Activated CD8-positive, alpha-beta T cell treated with anti-CD3 and anti-CD28 coated beads for 36 hours (primary cell): ENCODE measurements at regions of chr6 and their contacts with region 1.

Region 1: GRCh38 chr6:37169496-37170272 is at the start of gene PIM1:
- DNase-seq: peak; percentile 100
- ATAC-seq: peak; percentile 80
- H3K4me3 Mint-ChIP-seq: peak within 1 kb of the TSS; percentile 93
- H3K27ac Mint-ChIP-seq: peak within 1 kb of the TSS; percentile 98
- H3K4me1 Mint-ChIP-seq: peaks cover 37% of the 10 kb centered on the region
- H3K27me3 Mint-ChIP-seq: no peaks in the 10 kb centered on the region
- CTCF ChIP-seq: no peak
- total RNA-seq, gene PIM1: 293 to 305 TPM

Region 2: DNA sequence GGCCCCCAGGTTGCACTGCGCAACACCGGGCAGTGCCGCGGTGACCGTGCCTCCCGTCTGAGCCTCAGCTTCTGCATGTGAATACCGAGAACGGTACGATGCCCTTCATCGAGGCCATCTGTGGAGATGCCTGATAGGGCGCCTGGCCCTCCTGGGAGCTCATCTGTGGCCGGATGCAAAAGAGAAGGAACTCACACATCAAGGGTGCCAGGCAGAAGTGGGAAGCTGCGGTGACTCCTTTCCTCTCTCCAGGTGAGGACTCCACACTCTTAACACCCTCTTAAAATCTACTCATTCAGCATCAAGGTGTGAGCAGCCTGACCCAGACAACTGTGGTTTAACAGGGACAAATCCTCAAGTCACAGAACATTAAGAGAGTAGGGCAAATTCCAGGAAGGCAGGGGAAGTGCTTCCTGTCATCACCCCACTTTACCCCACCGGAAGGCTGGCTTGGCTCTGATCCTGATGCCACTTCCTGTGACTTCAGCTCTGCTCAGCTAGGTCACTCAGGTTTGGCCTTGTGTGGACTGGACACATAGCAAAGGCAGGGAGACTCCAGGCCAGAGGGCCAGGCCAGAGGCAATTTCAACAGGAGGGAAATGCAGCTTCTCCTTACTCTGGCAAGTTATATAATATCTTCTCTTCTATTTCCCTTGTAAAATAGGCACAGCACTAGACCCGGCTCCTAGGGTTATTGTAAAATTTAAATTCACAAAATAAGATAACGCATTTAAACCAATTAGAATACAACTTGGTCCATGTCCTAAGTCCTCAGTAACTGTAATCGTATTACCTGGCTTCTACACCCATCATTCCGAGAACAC is 399.8 kb before region 1 on chr6:
- CTCF ChIA-PET with region 1: no interaction called
- POLR2A ChIA-PET with region 1: no interaction called
- intact Hi-C with region 1: no loop called
- DNase-seq: peak; percentile 66
- ATAC-seq: peak; percentile 60
- H3K4me3 Mint-ChIP-seq: peak overlapping the region; percentile 39
- H3K27ac Mint-ChIP-seq: peak overlapping the region; percentile 79
- H3K4me1 Mint-ChIP-seq: peaks cover 35% of the 10 kb centered on the region
- H3K27me3 Mint-ChIP-seq: no peaks in the 10 kb centered on the region
- CTCF ChIP-seq: no peak

Region 3: DNA sequence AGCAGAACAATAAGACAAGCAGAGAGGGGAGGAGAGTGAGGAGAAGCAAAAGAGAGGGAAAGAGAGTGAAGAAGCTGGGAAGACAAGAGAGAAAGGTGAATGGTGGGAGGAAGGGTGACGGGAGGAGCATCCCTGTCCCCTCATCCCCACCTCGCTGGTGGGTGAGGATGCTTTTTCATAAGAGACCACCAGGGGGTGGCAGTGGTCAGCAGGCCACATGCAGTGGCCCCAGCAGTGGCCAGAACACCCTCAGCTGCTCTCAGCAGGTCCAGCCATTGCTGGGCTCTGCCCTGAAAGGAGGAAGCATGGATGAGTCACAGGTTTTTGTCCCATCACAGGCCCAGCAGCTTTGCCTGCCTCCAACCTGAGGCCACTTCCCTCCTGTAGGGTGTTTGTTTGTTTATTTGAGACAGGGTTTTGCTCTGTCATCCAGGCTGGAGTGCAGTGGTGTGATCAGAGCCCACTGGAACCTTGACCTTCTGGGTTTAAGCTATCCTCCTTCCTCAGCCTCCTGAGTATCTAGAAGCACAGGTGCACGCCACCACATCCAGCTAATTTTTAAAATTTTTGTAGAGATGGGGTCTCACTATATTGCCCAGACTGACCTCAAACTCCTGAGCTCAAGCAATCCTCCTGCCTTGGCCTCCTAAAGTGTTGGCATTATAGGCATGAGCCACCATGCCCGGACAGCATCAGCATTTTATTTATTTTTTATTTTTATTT is 140.3 kb before region 1 on chr6:
- CTCF ChIA-PET with region 1: interaction called, 502 read pairs
- POLR2A ChIA-PET with region 1: interaction called, 158 read pairs
- intact Hi-C with region 1: no loop called
- DNase-seq: peak; percentile 70
- ATAC-seq: peak; percentile 25
- H3K4me3 Mint-ChIP-seq: no peak overlapping the region
- H3K27ac Mint-ChIP-seq: peak overlapping the region; percentile 67
- H3K4me1 Mint-ChIP-seq: peaks cover 65% of the 10 kb centered on the region
- H3K27me3 Mint-ChIP-seq: no peaks in the 10 kb centered on the region
- CTCF ChIP-seq: peak; percentile 58

Region 4: DNA sequence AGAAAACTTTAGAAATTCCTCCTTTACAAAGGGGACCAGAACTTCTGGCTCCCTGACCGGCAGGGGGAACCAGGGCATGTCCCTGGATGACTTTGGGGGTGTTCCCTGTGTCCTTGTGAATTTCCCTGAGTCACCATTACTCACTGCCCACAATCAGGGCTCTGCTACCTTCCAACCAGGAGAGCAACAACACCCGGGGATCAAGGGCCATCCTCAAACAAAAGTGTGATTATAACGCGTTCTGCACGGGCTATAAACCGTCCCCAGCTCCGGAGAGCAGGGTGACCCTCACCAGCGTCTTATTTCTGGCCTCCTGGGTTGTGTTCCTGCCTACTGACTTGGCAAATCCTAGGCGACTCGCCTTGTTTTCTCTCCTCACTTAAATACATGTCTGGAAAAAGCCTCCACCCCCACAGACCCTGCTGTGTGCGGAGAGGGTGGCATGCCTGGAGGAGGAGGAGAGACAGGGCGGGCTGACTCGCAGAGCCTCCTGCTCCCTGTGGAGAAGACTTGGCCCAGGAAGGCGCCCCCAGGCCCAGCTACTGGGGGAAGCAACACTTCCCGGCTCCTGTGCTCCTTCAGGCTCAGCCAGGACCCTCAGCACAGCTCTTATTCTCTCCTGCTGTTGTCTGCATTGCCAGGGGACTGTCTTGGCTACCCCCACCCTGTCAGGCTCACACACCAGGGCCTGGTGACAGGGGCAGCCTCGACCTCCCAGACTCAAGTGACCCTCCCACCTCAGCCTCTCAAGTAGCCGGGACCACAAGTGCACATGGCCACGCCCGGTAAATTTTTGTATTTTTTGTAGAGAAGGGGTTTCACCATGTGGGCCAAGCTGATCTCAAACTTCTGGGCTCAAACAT is 110.1 kb before region 1 on chr6:
- CTCF ChIA-PET with region 1: interaction called, 226 read pairs
- POLR2A ChIA-PET with region 1: interaction called, 6 read pairs
- intact Hi-C with region 1: no loop called
- DNase-seq: peak; percentile 31
- ATAC-seq: peak; percentile 55
- H3K4me3 Mint-ChIP-seq: no peak overlapping the region
- H3K27ac Mint-ChIP-seq: no peak overlapping the region
- H3K4me1 Mint-ChIP-seq: peaks cover 7% of the 10 kb centered on the region
- H3K27me3 Mint-ChIP-seq: no peaks in the 10 kb centered on the region
- CTCF ChIP-seq: no peak

Region 5: GRCh38 chr6:37102279-37103168 is 67.2 kb before region 1 on chr6:
- CTCF ChIA-PET with region 1: interaction called, 24 read pairs
- POLR2A ChIA-PET with region 1: interaction called, 7 read pairs
- intact Hi-C with region 1: no loop called
- DNase-seq: peak; percentile 84
- ATAC-seq: peak; percentile 93
- H3K4me3 Mint-ChIP-seq: peak overlapping the region; percentile 65
- H3K27ac Mint-ChIP-seq: peak overlapping the region; percentile 79
- H3K4me1 Mint-ChIP-seq: peaks cover 21% of the 10 kb centered on the region
- H3K27me3 Mint-ChIP-seq: no peaks in the 10 kb centered on the region
- CTCF ChIP-seq: no peak

Region 6: GRCh38 chr6:37182736-37183590 is 13.3 kb after region 1 on chr6:
- CTCF ChIA-PET with region 1: interaction called, 57 read pairs
- POLR2A ChIA-PET with region 1: interaction called, 96 read pairs
- intact Hi-C with region 1: no loop called
- DNase-seq: peak; percentile 88
- ATAC-seq: peak; percentile 94
- H3K4me3 Mint-ChIP-seq: peak overlapping the region; percentile 32
- H3K27ac Mint-ChIP-seq: peak overlapping the region; percentile 99
- H3K4me1 Mint-ChIP-seq: peaks cover 56% of the 10 kb centered on the region
- H3K27me3 Mint-ChIP-seq: no peaks in the 10 kb centered on the region
- CTCF ChIP-seq: no peak

Region 7: GRCh38 chr6:37190159-37190535 is 20.5 kb after region 1 on chr6:
- CTCF ChIA-PET with region 1: interaction called, 57 read pairs
- POLR2A ChIA-PET with region 1: interaction called, 96 read pairs
- intact Hi-C with region 1: no loop called
- DNase-seq: peak; percentile 52
- ATAC-seq: peak; percentile 63
- H3K4me3 Mint-ChIP-seq: no peak overlapping the region
- H3K27ac Mint-ChIP-seq: peak overlapping the region; percentile 77
- H3K4me1 Mint-ChIP-seq: peaks cover 72% of the 10 kb centered on the region
- H3K27me3 Mint-ChIP-seq: no peaks in the 10 kb centered on the region
- CTCF ChIP-seq: no peak

Region 8: GRCh38 chr6:37483917-37484785 is 314.5 kb after region 1 on chr6:
- CTCF ChIA-PET with region 1: no interaction called
- POLR2A ChIA-PET with region 1: no interaction called
- intact Hi-C with region 1: no loop called
- DNase-seq: peak; percentile 79
- ATAC-seq: peak; percentile 88
- H3K4me3 Mint-ChIP-seq: no peak overlapping the region
- H3K27ac Mint-ChIP-seq: no peak overlapping the region
- H3K4me1 Mint-ChIP-seq: peaks cover 17% of the 10 kb centered on the region
- H3K27me3 Mint-ChIP-seq: no peaks in the 10 kb centered on the region
- CTCF ChIP-seq: peak; percentile 85